Posterior vena cava (tissue), 2 donors: ENCODE measurements at regions of chr1 and their contacts with region 1.

Region 1: GRCh38 chr1:41507110-41507720 is 22.7 kb upstream of the EDN2 start:
- DNase-seq: no peak

Region 2: GRCh38 chr1:41461790-41462611 is 45.2 kb before region 1 on chr1:
- intact Hi-C with region 1: no loop called
- DNase-seq: no peak

Region 3: GRCh38 chr1:41486839-41487728 is 20.1 kb before region 1 on chr1:
- intact Hi-C with region 1: loop called in 1 of 2 experiments (anchors 1 kb)
- DNase-seq: no peak